ENCODE measurements at regions of chr7 and their contacts with region 1.

Region 1: GRCh38 chr7:142301923-142302550 is 44.2 kb upstream of the PRSS58 start:
- DNase-seq: peak in 2 of 9 experiments; percentile 26 to 33
- ATAC-seq: no peak
- H3K4me3 ChIP-seq: no peak overlapping the region
- H3K4me3 Mint-ChIP-seq: no peak overlapping the region
- H3K27ac ChIP-seq: no peak overlapping the region
- H3K27ac Mint-ChIP-seq: no peak overlapping the region
- H3K4me1 ChIP-seq: peaks cover 16% of the 10 kb centered on the region
- H3K4me1 Mint-ChIP-seq: peaks cover 38% of the 10 kb centered on the region
- H3K27me3 ChIP-seq: peaks cover 0 to 4% of the 10 kb centered on the region in 2 experiments
- H3K27me3 Mint-ChIP-seq: peaks cover 16% of the 10 kb centered on the region
- CTCF ChIP-seq: peak; percentile 38

Region 2: DNA sequence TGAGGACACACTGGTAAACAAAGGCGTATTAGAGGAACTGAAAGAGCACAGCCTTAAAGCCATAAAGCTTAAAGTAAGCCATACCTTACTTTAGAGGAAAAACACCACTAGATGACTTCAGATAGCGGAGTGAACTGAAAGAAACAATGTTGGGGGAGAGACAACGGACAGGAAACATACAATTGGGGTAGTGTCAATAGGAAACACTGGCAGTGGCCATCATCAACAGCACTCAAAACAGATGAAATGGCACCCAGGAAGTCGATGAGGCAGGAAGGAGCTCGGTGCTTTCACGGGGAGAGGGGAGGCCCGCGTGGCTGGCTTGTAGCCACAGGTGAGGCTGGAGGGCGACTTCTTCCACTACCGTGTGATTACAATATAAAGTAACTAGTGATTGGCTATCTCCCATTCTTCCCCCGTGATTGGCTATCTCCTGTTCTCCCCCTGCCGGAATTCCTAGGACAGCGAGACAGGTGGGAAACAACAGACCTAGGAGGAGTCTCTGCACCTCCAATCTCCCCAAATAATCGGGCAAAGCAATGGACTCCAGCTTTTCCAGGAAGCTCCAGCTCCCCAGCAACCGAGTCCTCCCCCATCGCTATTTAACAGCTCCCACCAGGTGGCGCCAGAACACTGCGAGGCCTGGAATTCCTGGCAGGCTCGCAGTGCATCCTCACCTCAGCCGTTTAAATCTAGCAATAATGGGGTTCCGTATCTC is 326.1 kb before region 1 on chr7:
- CTCF ChIA-PET with region 1: interaction called, 22 read pairs
- POLR2A ChIA-PET with region 1: no interaction called
- intact Hi-C with region 1: loop called (anchors 2 to 5 kb)
- DNase-seq: peak; percentile 17 to 81 (median 64)
- ATAC-seq: peak; percentile 82
- H3K4me3 ChIP-seq: peak overlapping the region; percentile 46 to 50
- H3K4me3 Mint-ChIP-seq: peak overlapping the region; percentile 79
- H3K27ac ChIP-seq: peak overlapping the region in 1 of 2 experiments; percentile 18
- H3K27ac Mint-ChIP-seq: peak overlapping the region; percentile 46
- H3K4me1 ChIP-seq: peaks cover 6% of the 10 kb centered on the region
- H3K4me1 Mint-ChIP-seq: peaks cover 22% of the 10 kb centered on the region
- H3K27me3 ChIP-seq: no peaks in the 10 kb centered on the region
- H3K27me3 Mint-ChIP-seq: no peaks in the 10 kb centered on the region
- CTCF ChIP-seq: peak; percentile 76

Region 3: GRCh38 chr7:142313528-142313927 is 11.5 kb after region 1 on chr7:
- CTCF ChIA-PET with region 1: interaction called, 38 read pairs
- POLR2A ChIA-PET with region 1: no interaction called
- intact Hi-C with region 1: no loop called
- DNase-seq: peak in 8 of 9 experiments; percentile 18 to 73 (median 44)
- ATAC-seq: peak; percentile 89
- H3K4me3 ChIP-seq: peak overlapping the region in 1 of 2 experiments; percentile 20
- H3K4me3 Mint-ChIP-seq: peak overlapping the region; percentile 62
- H3K27ac ChIP-seq: no peak overlapping the region
- H3K27ac Mint-ChIP-seq: peak overlapping the region; percentile 38
- H3K4me1 ChIP-seq: peaks cover 20% of the 10 kb centered on the region
- H3K4me1 Mint-ChIP-seq: peaks cover 19% of the 10 kb centered on the region
- H3K27me3 ChIP-seq: no peaks in the 10 kb centered on the region
- H3K27me3 Mint-ChIP-seq: peaks cover 4% of the 10 kb centered on the region
- CTCF ChIP-seq: no peak

Region 4: GRCh38 chr7:142323706-142324105 is 21.7 kb after region 1 on chr7:
- CTCF ChIA-PET with region 1: interaction called, 10 read pairs
- POLR2A ChIA-PET with region 1: no interaction called
- intact Hi-C with region 1: no loop called
- DNase-seq: peak in 5 of 9 experiments; percentile 49 to 65 (median 52)
- ATAC-seq: peak; percentile 47
- H3K4me3 ChIP-seq: no peak overlapping the region
- H3K4me3 Mint-ChIP-seq: no peak overlapping the region
- H3K27ac ChIP-seq: no peak overlapping the region
- H3K27ac Mint-ChIP-seq: peak overlapping the region; percentile 86
- H3K4me1 ChIP-seq: peaks cover 8% of the 10 kb centered on the region
- H3K4me1 Mint-ChIP-seq: peaks cover 27% of the 10 kb centered on the region
- H3K27me3 ChIP-seq: no peaks in the 10 kb centered on the region
- H3K27me3 Mint-ChIP-seq: peaks cover 7% of the 10 kb centered on the region
- CTCF ChIP-seq: peak; percentile 51

Region 5: GRCh38 chr7:142345811-142346210 is 43.8 kb after region 1 on chr7:
- CTCF ChIA-PET with region 1: interaction called, 7 read pairs
- POLR2A ChIA-PET with region 1: no interaction called
- intact Hi-C with region 1: loop called in 1 of 2 experiments (anchors 2 kb)
- DNase-seq: peak in 5 of 9 experiments; percentile 33 to 70 (median 51)
- ATAC-seq: peak; percentile 90
- H3K4me3 ChIP-seq: no peak overlapping the region
- H3K4me3 Mint-ChIP-seq: peak overlapping the region; percentile 38
- H3K27ac ChIP-seq: peak overlapping the region; percentile 11 to 17
- H3K27ac Mint-ChIP-seq: peak overlapping the region; percentile 66
- H3K4me1 ChIP-seq: peaks cover 17% of the 10 kb centered on the region
- H3K4me1 Mint-ChIP-seq: peaks cover 35% of the 10 kb centered on the region
- H3K27me3 ChIP-seq: no peaks in the 10 kb centered on the region
- H3K27me3 Mint-ChIP-seq: no peaks in the 10 kb centered on the region
- CTCF ChIP-seq: no peak

Measured in CD8-positive, alpha-beta T cell (primary cell).